ENCODE measurements at regions of chr1 and their contacts with region 1.

Region 1: GRCh38 chr1:1374929-1375662 is at the start of gene AURKAIP1:
- DNase-seq: peak; percentile 80 to 98 (median 96)
- ATAC-seq: peak; percentile 84
- H3K4me3 ChIP-seq: peak within 1 kb of the TSS; percentile 74
- H3K4me3 Mint-ChIP-seq: peak within 1 kb of the TSS; percentile 82 to 96 (median 94)
- H3K27ac ChIP-seq: peak within 1 kb of the TSS; percentile 88
- H3K27ac Mint-ChIP-seq: peak within 1 kb of the TSS; percentile 91 to 98 (median 97)
- H3K4me1 ChIP-seq: peaks cover 18 to 35% of the 10 kb centered on the region in 2 donors
- H3K4me1 Mint-ChIP-seq: peaks cover 0 to 37% (median 21%) of the 10 kb centered on the region in 7 donors
- H3K27me3 ChIP-seq: no peaks in the 10 kb centered on the region
- H3K27me3 Mint-ChIP-seq: peaks cover 0 to 2% (median 0%) of the 10 kb centered on the region in 5 donors
- total RNA-seq, gene AURKAIP1: 53.8 to 107 (median 64.5) TPM

Region 2: DNA sequence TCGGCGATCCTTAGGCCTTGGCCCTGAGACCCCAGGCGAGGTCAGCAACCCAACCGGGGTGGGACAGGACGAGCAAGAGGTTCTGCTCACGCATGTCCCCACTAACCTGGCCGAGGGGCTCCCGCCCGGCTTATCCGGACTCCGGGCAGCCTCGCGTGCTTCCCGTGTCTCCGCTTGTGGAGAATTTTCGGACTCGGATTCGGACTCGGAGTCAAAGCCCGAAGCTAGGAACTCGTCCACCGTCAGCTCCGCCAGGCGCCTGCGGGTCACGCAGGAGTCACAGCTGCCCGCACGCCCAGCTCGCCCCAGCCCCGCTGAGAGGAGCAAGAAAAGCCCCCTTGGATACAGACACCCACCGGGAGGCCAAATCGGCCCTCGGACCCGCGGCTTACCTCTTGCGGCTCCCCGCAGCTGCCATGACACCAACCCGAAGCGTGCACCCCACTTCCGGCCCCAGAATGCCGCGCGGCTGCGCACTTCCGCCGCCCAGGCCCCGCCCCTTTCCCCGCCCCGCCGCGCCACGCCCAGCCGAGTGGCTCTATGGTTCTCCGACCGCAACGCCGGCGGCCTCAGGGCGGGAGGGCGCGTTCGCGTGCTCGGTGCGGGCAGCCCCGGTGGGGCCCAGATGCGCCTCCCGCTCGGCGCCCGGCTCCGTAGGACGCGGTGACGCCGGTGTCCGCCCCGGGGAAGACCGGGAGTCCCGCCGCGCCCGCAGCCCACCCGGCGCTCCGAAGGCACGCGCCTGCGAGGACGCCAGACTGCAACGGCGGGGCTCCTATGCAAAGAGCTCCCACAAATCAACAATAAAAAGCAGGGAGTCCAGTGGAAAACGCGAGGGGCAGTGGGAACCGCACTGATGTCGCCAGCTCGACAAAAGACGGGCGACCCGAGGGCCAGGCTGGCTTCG is 416.0 kb before region 1 on chr1 and contains the start of gene NOC2L:
- CTCF ChIA-PET with region 1: no interaction called
- POLR2A ChIA-PET with region 1: no interaction called
- intact Hi-C with region 1: loop called in 1 of 2 experiments (anchors 1 kb)
- DNase-seq: peak; percentile 84 to 97 (median 92)
- ATAC-seq: peak; percentile 96
- H3K4me3 ChIP-seq: peak within 1 kb of the TSS; percentile 87
- H3K4me3 Mint-ChIP-seq: peak within 1 kb of the TSS; percentile 83 to 95 (median 90)
- H3K27ac ChIP-seq: peak within 1 kb of the TSS; percentile 89
- H3K27ac Mint-ChIP-seq: peak within 1 kb of the TSS; percentile 48 to 85 (median 77)
- H3K4me1 ChIP-seq: peaks cover 8 to 12% of the 10 kb centered on the region in 2 donors
- H3K4me1 Mint-ChIP-seq: peaks cover 12 to 28% (median 21%) of the 10 kb centered on the region in 7 donors
- H3K27me3 ChIP-seq: no peaks in the 10 kb centered on the region
- H3K27me3 Mint-ChIP-seq: peaks cover 0 to 2% (median 0%) of the 10 kb centered on the region in 5 donors
- total RNA-seq, gene NOC2L: 46.6 to 88.3 (median 67.9) TPM

Region 3: DNA sequence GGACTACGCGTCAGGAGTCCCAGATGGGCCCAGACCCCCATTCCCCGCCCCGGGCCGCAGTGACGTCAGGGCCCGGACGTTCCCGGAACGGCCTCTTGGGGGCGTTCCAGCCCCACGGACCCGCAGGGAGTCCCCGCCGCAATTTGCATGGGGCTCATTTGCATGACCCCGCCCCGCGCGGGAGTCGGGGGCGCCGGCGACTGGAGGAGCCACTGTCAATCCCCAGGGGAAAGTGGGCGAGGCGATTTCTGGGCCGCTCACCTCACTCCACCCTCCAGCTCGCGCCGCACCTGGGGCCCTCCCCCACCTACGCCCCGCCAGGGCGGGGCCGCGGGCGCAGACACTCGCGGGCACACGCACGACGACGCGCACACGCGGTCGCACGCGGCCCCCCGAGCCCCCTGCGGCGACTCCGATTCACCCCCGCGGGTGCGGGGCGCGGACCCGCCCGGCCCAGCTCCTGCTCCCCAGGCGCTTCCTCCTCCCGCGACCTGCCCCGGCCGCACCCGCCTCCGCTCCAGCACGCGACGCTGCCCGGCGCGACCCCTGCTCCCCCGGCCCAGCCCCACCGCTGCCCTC is 342.0 kb before region 1 on chr1:
- CTCF ChIA-PET with region 1: no interaction called
- POLR2A ChIA-PET with region 1: no interaction called
- intact Hi-C with region 1: loop called in 1 of 2 experiments (anchors 2 kb)
- DNase-seq: peak; percentile 67 to 93 (median 79)
- ATAC-seq: peak; percentile 94
- H3K4me3 ChIP-seq: peak overlapping the region; percentile 43
- H3K4me3 Mint-ChIP-seq: peak overlapping the region in 7 of 10 donors; percentile 39 to 76 (median 62)
- H3K27ac ChIP-seq: no peak overlapping the region
- H3K27ac Mint-ChIP-seq: peak overlapping the region in 1 of 9 donors; percentile 52
- H3K4me1 ChIP-seq: peaks cover 0 to 5% of the 10 kb centered on the region in 2 donors
- H3K4me1 Mint-ChIP-seq: peaks cover 0 to 8% (median 6%) of the 10 kb centered on the region in 7 donors
- H3K27me3 ChIP-seq: peaks cover 0 to 16% of the 10 kb centered on the region in 2 donors
- H3K27me3 Mint-ChIP-seq: peaks cover 3 to 23% (median 14%) of the 10 kb centered on the region in 5 donors

Region 4: DNA sequence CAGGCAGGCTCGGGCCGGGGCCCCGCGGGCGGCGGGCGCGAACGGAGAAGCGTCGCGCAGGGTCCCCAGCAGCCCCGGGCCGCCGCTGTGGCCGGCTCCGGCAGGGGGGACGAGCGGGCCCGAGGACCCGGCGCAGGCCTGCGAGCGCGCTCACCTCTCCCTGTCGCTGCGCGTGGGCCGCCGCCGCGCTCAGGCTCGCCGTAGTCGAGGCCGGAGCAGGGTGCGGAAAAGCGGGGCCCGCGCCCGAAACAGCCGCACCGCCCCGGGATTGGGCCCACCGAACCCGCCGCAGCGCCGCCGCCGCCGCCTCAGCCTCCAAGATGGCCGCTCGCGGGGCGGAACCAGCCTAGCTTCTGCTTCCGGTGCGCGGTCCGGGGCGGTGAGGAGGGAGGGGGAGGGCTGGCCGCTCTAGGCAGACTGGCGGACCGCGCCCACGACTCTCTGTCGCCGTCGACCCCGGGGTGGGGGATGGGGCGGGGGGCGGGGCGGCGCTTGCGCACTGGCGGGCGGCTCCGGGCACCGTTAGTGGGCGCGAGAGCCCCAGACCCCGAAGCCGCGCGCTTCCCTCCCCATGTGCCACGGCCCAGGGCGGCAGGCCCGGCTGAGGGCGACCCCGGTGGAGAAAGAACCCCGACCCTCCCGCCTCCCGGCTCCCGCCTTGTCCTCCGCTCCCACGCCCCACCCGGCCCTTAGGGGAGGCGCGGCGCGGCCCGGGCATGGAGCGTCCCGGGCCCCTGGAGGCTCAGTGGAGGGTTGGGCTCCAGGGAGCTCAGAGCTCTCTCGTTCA is 101.4 kb before region 1 on chr1 and contains the start of gene UBE2J2:
- CTCF ChIA-PET with region 1: no interaction called
- POLR2A ChIA-PET with region 1: interaction called, 5 read pairs
- intact Hi-C with region 1: loop called in 1 of 2 experiments (anchors 1 kb)
- DNase-seq: peak; percentile 83 to 92 (median 90)
- ATAC-seq: peak; percentile 99
- H3K4me3 ChIP-seq: peak within 1 kb of the TSS; percentile 77
- H3K4me3 Mint-ChIP-seq: peak within 1 kb of the TSS; percentile 79 to 92 (median 88)
- H3K27ac ChIP-seq: peak within 1 kb of the TSS; percentile 90
- H3K27ac Mint-ChIP-seq: peak within 1 kb of the TSS; percentile 36 to 94 (median 83)
- H3K4me1 ChIP-seq: peaks cover 28 to 39% of the 10 kb centered on the region in 2 donors
- H3K4me1 Mint-ChIP-seq: peaks cover 21 to 45% (median 35%) of the 10 kb centered on the region in 7 donors
- H3K27me3 ChIP-seq: no peaks in the 10 kb centered on the region
- H3K27me3 Mint-ChIP-seq: no peaks in the 10 kb centered on the region
- total RNA-seq, gene UBE2J2: 62.3 to 89.3 (median 75.1) TPM

Region 5: GRCh38 chr1:1349256-1350012 is 25.7 kb before region 1 on chr1 and contains the start of gene DVL1:
- CTCF ChIA-PET with region 1: interaction called, 6 read pairs
- POLR2A ChIA-PET with region 1: interaction called, 15 read pairs
- intact Hi-C with region 1: loop called (anchors 1 kb)
- DNase-seq: peak; percentile 51 to 86 (median 78)
- ATAC-seq: peak; percentile 94
- H3K4me3 ChIP-seq: peak within 1 kb of the TSS; percentile 56
- H3K4me3 Mint-ChIP-seq: peak within 1 kb of the TSS; percentile 40 to 85 (median 76)
- H3K27ac ChIP-seq: peak within 1 kb of the TSS; percentile 92
- H3K27ac Mint-ChIP-seq: peak within 1 kb of the TSS in 5 of 9 donors; percentile 34 to 76 (median 56)
- H3K4me1 ChIP-seq: peaks cover 0 to 19% of the 10 kb centered on the region in 2 donors
- H3K4me1 Mint-ChIP-seq: peaks cover 13 to 34% (median 29%) of the 10 kb centered on the region in 7 donors
- H3K27me3 ChIP-seq: peaks cover 0 to 6% of the 10 kb centered on the region in 2 donors
- H3K27me3 Mint-ChIP-seq: peaks cover 0 to 24% (median 9%) of the 10 kb centered on the region in 5 donors
- total RNA-seq, gene DVL1: 40.2 to 54.9 (median 45.9) TPM

Region 6: DNA sequence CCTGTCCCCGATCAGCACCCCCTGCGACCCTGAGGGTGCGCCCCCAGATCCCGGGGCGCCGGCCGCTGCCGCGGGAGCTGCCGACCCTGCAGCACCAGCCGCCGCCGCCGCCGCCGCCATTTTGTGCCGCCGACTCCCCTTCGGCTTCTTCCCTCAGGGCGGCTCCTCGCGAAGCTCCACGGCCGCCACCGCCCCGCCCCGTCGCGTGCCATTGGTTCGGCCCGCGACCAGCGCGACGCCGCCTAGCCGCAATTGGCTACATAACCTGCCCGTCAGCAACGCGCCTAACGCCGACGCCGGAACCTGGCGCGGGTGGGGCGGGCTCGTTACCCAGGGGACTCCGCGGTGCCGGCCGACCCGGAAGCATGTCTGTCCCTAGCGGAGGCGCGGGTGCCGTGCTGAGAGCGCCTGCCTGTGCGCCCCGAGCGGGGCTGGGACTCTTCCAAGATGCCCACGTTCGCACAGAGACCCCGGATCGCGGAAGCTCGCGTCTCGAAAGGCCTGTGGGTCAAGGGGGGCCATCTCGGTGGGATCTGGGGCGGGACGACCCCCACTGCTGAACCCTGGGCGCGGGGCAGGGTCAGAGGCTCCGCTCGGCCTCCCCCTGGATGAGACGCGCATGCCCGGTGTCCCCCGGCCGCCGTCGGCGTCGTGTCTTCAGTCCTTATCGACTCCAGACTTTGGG is 24.2 kb after region 1 on chr1 and contains the start of gene CCNL2:
- CTCF ChIA-PET with region 1: interaction called, 7 read pairs
- POLR2A ChIA-PET with region 1: interaction called, 59 read pairs
- intact Hi-C with region 1: loop called (anchors 1 kb)
- DNase-seq: peak; percentile 98 to 99 (median 99)
- ATAC-seq: peak; percentile 97
- H3K4me3 ChIP-seq: peak within 1 kb of the TSS; percentile 99
- H3K4me3 Mint-ChIP-seq: peak within 1 kb of the TSS; percentile 85 to 94 (median 90)
- H3K27ac ChIP-seq: peak within 1 kb of the TSS; percentile 91
- H3K27ac Mint-ChIP-seq: peak within 1 kb of the TSS; percentile 78 to 93 (median 89)
- H3K4me1 ChIP-seq: peaks cover 20 to 23% of the 10 kb centered on the region in 2 donors
- H3K4me1 Mint-ChIP-seq: peaks cover 22 to 65% (median 43%) of the 10 kb centered on the region in 7 donors
- H3K27me3 ChIP-seq: no peaks in the 10 kb centered on the region
- H3K27me3 Mint-ChIP-seq: no peaks in the 10 kb centered on the region
- total RNA-seq, gene CCNL2: 130 to 403 (median 278) TPM

Region 7: DNA sequence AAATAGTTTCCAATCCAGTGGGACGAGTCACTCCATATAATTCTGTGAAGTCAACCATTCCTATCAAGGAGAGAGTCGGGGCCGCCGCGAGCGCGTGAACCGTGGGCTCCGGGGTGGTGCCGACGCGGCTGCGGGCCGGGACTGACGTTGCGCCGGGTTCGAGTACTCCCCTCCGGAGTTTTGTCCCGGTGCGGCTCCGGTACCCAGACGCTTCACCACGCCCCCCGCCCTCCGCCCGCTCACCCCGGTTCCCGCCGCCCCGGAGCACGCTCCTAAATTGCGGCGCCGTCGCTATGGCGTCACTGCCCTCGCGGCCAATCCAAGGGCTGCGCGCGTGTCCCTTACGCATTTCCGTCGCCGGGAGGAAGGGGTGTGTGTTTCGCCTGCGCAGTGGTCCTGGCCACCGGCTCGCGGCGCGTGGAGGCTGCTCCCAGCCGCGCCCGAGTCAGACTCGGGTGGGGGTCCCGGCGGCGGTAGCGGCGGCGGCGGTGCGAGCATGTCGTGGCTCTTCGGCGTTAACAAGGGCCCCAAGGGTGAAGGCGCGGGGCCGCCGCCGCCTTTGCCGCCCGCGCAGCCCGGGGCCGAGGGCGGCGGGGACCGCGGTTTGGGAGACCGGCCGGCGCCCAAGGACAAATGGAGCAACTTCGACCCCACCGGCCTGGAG is 96.4 kb after region 1 on chr1 and contains the start of gene ATAD3B:
- CTCF ChIA-PET with region 1: no interaction called
- POLR2A ChIA-PET with region 1: no interaction called
- intact Hi-C with region 1: loop called in 1 of 2 experiments (anchors 1 kb)
- DNase-seq: peak; percentile 80 to 95 (median 88)
- ATAC-seq: peak; percentile 98
- H3K4me3 ChIP-seq: peak within 1 kb of the TSS; percentile 68
- H3K4me3 Mint-ChIP-seq: peak within 1 kb of the TSS; percentile 78 to 97 (median 89)
- H3K27ac ChIP-seq: peak within 1 kb of the TSS; percentile 90
- H3K27ac Mint-ChIP-seq: peak within 1 kb of the TSS; percentile 77 to 98 (median 92)
- H3K4me1 ChIP-seq: peaks cover 9 to 14% of the 10 kb centered on the region in 2 donors
- H3K4me1 Mint-ChIP-seq: peaks cover 6 to 39% (median 25%) of the 10 kb centered on the region in 7 donors
- H3K27me3 ChIP-seq: no peaks in the 10 kb centered on the region
- H3K27me3 Mint-ChIP-seq: no peaks in the 10 kb centered on the region
- total RNA-seq, gene ATAD3B: 42.5 to 53.8 (median 51.7) TPM

Region 8: DNA sequence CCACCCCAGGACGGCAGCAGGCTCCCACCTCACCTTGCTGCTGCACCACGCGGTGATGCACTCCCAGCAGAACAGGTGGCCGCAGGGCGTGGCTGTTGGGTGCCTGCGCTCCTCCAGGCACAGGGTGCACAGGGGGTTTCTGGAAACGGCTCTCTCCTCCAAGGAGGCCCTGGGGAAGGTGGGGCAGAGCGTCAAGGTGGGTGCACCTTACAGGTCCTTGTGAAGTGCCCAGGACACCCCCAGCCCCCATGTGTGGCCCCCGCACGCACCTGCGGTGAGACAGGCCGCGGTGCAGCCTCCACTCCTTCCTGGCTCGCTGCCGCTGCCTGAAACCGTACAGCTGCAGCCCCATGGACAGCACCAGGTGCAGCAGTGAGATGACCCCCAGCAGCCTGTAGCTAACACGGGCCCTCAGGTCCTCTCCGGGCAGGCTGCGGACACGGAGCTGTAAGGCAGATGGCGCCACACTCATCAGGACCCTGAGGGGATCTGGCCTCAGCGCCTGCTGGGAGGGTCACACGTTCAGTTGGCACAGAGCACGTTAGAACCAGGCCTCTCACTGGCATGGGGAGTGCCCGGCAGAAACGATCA is 1031.5 kb after region 1 on chr1:
- CTCF ChIA-PET with region 1: no interaction called
- POLR2A ChIA-PET with region 1: no interaction called
- intact Hi-C with region 1: no loop called
- DNase-seq: no peak
- ATAC-seq: no peak
- H3K4me3 ChIP-seq: no peak overlapping the region
- H3K4me3 Mint-ChIP-seq: no peak overlapping the region
- H3K27ac ChIP-seq: no peak overlapping the region
- H3K27ac Mint-ChIP-seq: peak overlapping the region in 1 of 9 donors; percentile 67
- H3K4me1 ChIP-seq: peaks cover 0 to 1% of the 10 kb centered on the region in 2 donors
- H3K4me1 Mint-ChIP-seq: peaks cover 0 to 17% (median 11%) of the 10 kb centered on the region in 7 donors
- H3K27me3 ChIP-seq: no peaks in the 10 kb centered on the region
- H3K27me3 Mint-ChIP-seq: no peaks in the 10 kb centered on the region

Measured in naive thymus-derived CD4-positive, alpha-beta T cell (primary cell).